PC-3 (cell line): ENCODE measurements at regions of chr1 and their contacts with region 1.

Region 1: DNA sequence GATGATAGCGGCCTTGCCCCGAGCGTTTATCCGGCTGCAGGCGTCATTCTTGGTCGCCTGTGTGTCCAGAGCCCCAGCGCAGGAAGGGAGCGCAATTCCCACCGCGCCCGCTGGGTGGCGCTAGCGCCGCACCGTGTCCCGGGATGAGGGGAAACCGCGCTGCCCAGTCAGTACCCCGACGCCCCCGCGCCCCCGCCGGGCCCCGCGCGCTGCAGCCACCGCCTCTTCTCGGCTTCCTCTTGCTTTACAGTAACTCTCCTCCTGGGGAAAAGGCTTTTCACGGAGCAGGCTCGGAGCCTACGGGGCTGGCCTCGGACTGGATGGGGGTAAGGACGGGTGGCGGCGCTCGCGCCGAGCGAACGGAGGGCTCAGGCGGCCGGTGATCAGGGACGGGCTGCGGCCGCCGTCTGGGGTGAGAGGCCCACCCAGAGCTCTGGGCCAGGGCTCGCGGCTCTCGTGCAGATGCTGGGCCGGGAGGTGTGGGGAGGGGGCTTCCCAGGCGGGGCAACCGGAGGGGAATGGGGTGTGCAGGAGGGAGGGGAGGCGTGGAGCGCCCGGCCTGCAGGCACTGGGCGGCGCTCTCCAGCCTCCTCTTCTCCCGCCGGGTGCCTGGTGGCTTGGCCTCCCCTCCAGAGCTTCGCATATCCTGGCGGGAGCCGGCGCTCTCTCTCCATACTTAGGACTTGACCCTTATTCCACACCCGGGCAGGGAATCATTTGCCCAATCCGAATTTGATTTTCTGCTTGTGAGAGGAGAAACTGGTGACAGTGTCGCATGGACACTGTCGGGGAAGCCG is 29.8 kb downstream of the TEX35 start:
- DNase-seq: peak; percentile 85
- ATAC-seq: peak; percentile 68
- H3K4me3 ChIP-seq: peak overlapping the region; percentile 85
- H3K27ac ChIP-seq: peak overlapping the region; percentile 93
- H3K4me1 ChIP-seq: peaks cover 56% of the 10 kb centered on the region
- H3K27me3 ChIP-seq: no peaks in the 10 kb centered on the region
- CTCF ChIP-seq: peak; percentile 78

Region 2: DNA sequence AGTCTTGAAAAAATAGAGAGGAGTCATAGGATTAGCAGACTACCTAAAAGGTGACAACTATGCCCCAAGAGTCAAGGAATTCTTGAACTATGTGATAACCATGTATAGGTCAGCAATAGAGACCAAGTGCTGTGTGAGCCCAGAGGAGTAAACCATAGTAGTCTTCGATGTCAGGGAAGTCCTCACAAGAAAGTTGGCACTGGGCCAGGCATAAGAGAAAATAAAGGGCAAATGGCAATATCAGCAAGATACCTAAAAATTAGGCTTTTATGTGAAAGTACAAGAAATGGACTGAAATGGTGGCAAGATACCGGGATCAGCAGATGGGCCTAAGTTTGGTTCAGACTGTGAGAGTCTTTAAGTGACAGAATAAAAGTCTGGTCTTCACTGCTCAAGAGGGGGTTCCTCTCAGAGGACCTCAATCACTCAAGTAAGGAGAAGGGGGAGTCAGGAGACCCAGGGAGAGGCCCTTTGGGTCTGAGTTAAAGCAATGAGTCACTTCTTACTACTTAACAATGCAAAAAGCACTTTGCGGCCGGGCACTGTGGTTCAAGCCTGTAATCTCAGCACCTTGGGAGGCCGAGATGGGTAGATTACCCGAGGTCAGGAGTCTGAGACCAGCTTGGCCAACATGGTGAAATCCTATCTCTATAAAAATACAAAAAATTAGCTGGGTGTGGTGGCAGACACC is 65.1 kb after region 1 on chr1:
- CTCF ChIA-PET with region 1: no interaction called
- POLR2A ChIA-PET with region 1: no interaction called
- intact Hi-C with region 1: loop called (anchors 1 kb)
- DNase-seq: no peak
- ATAC-seq: no peak
- H3K4me3 ChIP-seq: no peak overlapping the region
- H3K27ac ChIP-seq: peak overlapping the region; percentile 97
- H3K4me1 ChIP-seq: peaks cover 52% of the 10 kb centered on the region
- H3K27me3 ChIP-seq: no peaks in the 10 kb centered on the region
- CTCF ChIP-seq: no peak

Region 3: DNA sequence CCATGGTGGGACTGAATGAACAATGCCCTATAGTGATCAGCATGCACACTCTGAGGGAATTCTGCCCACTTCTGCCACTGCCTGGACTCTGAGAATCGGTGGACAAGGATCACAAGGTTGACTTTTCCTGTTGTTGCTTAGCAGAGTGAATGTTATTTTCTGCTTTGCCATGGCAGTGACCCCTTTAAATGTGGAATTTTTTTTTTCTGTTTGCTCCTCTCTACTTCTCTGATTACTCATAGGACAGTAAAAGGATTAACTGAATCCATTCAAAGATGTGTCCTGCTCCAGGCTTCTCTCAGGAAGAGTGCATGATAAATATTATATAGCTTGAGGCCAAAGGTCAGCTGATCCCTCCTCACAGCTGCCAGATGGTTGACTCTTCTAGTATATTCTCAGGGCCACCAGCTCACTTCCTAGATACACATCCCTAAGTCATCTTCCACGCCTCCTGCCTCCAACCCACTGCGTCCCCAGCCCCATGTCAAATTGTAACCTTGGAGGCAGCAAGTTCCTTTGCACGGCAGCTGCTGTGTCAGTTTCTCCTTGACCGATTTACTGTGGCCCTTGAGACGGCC is 108.3 kb after region 1 on chr1:
- CTCF ChIA-PET with region 1: no interaction called
- POLR2A ChIA-PET with region 1: no interaction called
- intact Hi-C with region 1: loop called (anchors 5 kb)
- DNase-seq: peak; percentile 85
- ATAC-seq: peak; percentile 70
- H3K4me3 ChIP-seq: no peak overlapping the region
- H3K27ac ChIP-seq: peak overlapping the region; percentile 95
- H3K4me1 ChIP-seq: peaks cover 57% of the 10 kb centered on the region
- H3K27me3 ChIP-seq: no peaks in the 10 kb centered on the region
- CTCF ChIP-seq: no peak

Region 4: GRCh38 chr1:178684542-178685000 is 141.8 kb after region 1 on chr1:
- CTCF ChIA-PET with region 1: no interaction called
- POLR2A ChIA-PET with region 1: no interaction called
- intact Hi-C with region 1: loop called (anchors 2 kb)
- DNase-seq: peak; percentile 90
- ATAC-seq: peak; percentile 88
- H3K4me3 ChIP-seq: no peak overlapping the region
- H3K27ac ChIP-seq: peak overlapping the region; percentile 74
- H3K4me1 ChIP-seq: peaks cover 47% of the 10 kb centered on the region
- H3K27me3 ChIP-seq: no peaks in the 10 kb centered on the region
- CTCF ChIP-seq: no peak

Region 5: DNA sequence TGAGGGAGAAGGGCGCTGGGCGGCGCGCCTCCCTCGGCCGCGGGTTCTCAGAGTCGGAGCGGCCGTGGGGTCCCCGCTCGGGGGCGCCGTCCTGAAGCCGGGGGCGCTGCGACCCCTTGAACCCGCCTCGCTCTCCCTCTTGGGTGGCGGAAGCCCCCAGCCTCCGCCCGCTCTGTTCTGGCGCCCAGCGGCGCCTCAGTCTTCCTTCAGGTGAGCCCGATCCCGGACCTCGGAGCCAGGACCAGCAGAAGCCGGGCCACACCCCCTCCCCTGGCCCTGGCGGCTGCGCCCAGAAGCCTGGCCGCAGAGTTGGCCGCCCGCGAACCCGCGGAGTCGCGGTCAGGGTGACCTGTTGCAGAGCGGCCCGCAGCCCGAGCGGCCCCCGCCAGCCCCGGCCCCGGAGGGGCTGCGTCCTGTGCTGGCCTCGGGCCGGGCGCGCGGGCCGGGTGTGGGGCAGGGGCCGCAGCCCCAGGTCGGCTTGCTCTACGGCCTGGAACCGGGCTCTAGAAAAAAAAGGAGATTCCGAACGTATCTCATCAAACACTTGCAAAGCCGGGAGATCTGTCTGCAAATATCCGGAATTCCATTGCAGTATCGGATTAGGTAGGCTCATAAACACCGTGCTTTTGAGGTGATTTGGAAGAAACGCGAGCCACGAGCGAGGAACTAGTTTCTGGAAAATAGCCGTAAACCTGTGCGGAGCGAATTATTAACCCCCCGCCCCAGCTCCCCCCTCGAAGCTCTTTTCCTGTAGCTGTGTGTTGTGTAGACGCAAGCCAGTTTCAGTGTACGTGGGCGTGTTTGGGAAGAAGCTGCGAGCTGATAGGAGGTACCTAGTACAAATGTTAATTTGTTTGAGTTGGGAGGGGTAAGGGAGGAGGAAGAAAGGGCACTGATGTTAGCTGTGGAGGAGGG is 183.1 kb after region 1 on chr1:
- CTCF ChIA-PET with region 1: no interaction called
- POLR2A ChIA-PET with region 1: interaction called, 3 read pairs
- intact Hi-C with region 1: loop called (anchors 1 kb)
- DNase-seq: peak; percentile 88
- ATAC-seq: peak; percentile 80
- H3K4me3 ChIP-seq: peak overlapping the region; percentile 93
- H3K27ac ChIP-seq: peak overlapping the region; percentile 76
- H3K4me1 ChIP-seq: peaks cover 24% of the 10 kb centered on the region
- H3K27me3 ChIP-seq: no peaks in the 10 kb centered on the region
- CTCF ChIP-seq: no peak; the same call in 1 of the 2 replicates

Region 6: GRCh38 chr1:178749581-178750166 is 206.9 kb after region 1 on chr1:
- CTCF ChIA-PET with region 1: interaction called, 3 read pairs
- POLR2A ChIA-PET with region 1: no interaction called
- intact Hi-C with region 1: loop called (anchors 1 kb)
- DNase-seq: no peak
- ATAC-seq: no peak
- H3K4me3 ChIP-seq: no peak overlapping the region
- H3K27ac ChIP-seq: no peak overlapping the region
- H3K4me1 ChIP-seq: peaks cover 3% of the 10 kb centered on the region; the same call in 1 of the 2 replicates
- H3K27me3 ChIP-seq: no peaks in the 10 kb centered on the region
- CTCF ChIP-seq: no peak

Region 7: GRCh38 chr1:179002552-179003345 is 460.0 kb after region 1 on chr1:
- CTCF ChIA-PET with region 1: no interaction called
- POLR2A ChIA-PET with region 1: no interaction called
- intact Hi-C with region 1: loop called (anchors 2 kb)
- DNase-seq: peak; percentile 68
- ATAC-seq: peak; percentile 62
- H3K4me3 ChIP-seq: peak overlapping the region; percentile 29; the same call in 1 of the 2 replicates
- H3K27ac ChIP-seq: no peak overlapping the region
- H3K4me1 ChIP-seq: 0 out of 2 replicates have a peak, but pooled peaks cover 9% of the 10 kb centered on the region
- H3K27me3 ChIP-seq: no peaks in the 10 kb centered on the region
- CTCF ChIP-seq: peak; percentile 88